AG04449 (cell line): ENCODE measurements at regions of chr4 and their contacts with region 1.

Region 1: GRCh38 chr4:166594326-166594946 is 639.9 kb downstream of the SPOCK3 start:
- DNase-seq: no peak
- H3K4me3 ChIP-seq: no peak overlapping the region
- CTCF ChIP-seq: peak; percentile 87

Region 2: DNA sequence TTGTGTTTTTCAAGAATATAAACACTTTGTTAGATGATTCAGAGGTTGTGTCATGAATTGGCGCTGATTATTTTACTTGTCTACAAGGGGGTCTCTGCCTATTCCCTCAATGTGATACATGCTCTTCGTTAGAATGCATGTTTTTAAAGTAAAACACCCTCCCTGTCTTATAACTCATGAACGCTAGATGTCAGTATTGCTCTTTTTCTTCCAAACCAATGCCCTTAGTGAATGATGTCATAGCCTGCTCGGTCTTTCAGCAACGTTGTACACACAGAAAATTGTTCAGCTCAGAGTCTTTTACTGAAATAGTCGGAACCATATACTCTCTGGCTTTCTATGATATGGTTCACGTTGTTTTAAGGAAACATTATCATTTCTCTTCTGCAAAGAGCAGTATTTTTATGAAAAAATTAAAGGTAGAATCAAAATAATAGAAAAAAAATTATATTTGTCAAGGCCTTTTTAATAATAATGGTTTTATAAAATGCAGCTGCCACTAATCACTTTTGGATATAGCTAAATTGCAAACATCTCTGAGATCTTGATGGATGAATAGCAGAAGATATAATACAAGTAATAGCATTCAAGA is 428.5 kb before region 1 on chr4:
- CTCF ChIA-PET with region 1: interaction called, 255 read pairs
- POLR2A ChIA-PET with region 1: interaction called, 3 read pairs
- DNase-seq: no peak
- H3K4me3 ChIP-seq: no peak overlapping the region
- CTCF ChIP-seq: peak; percentile 61

Region 3: DNA sequence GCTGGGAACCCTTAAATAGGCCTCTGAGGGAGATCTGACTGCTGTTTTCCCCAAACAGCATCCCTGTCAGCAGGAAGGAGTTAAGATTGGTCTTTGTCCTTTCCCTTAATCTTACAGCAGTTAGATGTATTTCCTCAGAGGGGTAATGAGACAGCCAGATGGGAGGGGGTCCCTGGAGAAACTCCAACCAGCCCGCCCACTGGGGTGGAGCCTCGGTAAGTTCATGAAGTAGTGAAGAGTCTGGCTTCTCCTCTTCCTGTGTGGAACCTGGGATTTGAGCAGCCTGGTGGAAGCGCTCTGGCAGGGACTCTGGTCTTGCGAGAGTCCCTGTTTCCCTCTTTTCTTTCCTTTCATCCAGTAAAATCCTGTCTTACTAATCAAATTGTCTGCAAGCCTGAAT is 391.4 kb before region 1 on chr4:
- CTCF ChIA-PET with region 1: interaction called, 13 read pairs
- POLR2A ChIA-PET with region 1: no interaction called
- DNase-seq: no peak
- H3K4me3 ChIP-seq: no peak overlapping the region
- CTCF ChIP-seq: no peak

Region 4: GRCh38 chr4:166324321-166324720 is 270.1 kb before region 1 on chr4:
- CTCF ChIA-PET with region 1: interaction called, 16 read pairs
- POLR2A ChIA-PET with region 1: no interaction called
- DNase-seq: no peak
- H3K4me3 ChIP-seq: no peak overlapping the region
- CTCF ChIP-seq: no peak

Region 5: GRCh38 chr4:166577639-166578038 is 16.8 kb before region 1 on chr4:
- CTCF ChIA-PET with region 1: interaction called, 36 read pairs
- POLR2A ChIA-PET with region 1: no interaction called
- DNase-seq: no peak
- H3K4me3 ChIP-seq: no peak overlapping the region
- CTCF ChIP-seq: no peak